RWPE1 (cell line): ENCODE measurements at regions of chr9 and their contacts with region 1.

Region 1: GRCh38 chr9:78296893-78297671 is at the start of gene PSAT1:
- DNase-seq: peak; percentile 100
- H3K27ac ChIP-seq: peak within 1 kb of the TSS; percentile 98
- CTCF ChIP-seq: no peak

Region 2: DNA sequence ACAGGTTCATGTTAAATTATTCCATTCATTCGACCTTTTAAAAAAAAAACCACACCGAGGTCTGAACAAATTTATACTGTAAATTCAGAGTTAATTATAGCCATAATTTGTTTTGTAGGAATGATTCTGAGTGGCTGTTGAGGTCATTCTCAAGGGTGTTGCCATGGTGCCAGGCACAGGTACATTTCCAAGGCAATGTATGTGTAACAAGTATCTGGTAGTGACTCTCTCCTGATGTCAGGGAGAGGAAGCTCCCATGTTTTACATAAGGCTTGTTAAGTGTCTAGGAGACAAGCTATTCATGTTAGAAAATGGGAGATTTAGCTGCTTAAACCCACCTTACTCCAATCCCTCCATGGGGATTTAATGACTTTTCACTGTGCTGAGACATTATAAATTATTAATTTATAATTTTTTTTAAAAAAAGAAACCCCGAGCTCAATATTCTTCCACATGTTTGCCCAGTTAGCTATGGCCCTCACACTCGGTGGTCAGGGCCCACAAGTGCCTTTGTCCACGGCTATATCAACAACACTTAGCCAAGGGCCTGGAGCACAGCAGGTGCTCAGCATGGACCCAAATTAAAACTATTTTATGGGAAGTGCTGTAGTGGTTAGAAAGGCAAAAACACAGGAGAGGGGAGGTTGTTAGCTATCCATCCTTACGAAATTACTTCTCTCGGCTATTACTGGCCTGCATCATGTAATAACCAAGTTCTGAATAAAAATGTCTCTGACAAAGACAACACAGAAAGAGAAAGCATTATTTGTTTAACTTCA is 494.4 kb before region 1 on chr9:
- CTCF ChIA-PET with region 1: interaction called, 10 read pairs
- POLR2A ChIA-PET with region 1: no interaction called
- DNase-seq: no peak
- H3K27ac ChIP-seq: no peak overlapping the region
- CTCF ChIP-seq: no peak

Region 3: DNA sequence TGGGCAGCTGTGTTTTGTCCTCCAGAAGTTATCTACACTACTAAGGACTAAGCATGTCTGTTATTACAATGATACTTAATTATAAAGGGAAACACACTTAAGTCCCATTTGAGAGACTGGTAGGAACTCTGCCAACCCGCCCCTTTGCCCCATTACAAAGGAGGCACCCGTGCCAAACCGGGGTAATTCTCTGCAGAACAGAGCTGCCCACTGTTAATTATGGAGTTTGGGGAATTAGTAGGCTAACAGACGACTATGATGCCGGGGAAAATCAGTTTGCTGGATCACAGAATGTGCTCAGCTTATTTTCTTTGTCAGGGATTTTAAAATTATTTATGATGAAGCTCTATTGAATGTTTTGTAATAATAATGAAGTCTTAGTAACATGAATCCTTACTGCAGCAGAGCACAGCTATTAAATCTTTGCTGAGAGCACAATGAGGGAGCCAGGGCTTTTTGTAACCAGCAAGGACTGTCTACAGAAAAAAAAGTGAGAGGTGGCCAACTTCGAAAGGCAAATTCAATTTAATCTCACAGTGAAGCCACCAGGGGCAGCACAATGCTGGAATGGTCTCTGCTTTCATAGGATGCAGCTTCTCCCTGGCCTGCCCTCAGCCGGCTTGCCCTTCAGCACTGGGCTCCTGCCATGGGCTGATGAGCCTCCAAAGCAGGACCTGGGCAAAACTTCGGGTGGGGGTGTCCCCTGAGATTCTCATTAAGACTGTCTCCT is 400.0 kb before region 1 on chr9:
- CTCF ChIA-PET with region 1: no interaction called
- POLR2A ChIA-PET with region 1: no interaction called
- DNase-seq: no peak
- H3K27ac ChIP-seq: no peak overlapping the region
- CTCF ChIP-seq: no peak

Region 4: DNA sequence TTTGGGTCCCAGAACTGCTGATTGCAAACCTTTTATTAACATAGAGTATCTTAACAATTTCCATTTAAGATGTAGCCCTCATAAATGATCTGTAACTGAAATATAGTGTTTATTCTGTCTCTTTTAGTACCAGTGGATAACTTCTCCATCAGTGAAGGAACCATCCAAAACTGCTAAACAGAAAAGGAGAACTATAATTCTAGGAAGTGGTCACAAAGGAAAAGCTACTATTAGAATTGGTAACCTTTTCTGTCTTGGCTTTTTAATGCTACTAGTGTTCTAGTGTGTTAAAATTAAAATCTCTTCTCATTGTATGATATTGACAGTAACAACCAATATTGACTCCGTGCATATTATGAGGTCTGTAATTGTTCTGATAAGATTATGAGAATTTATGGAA is 48.4 kb before region 1 on chr9:
- CTCF ChIA-PET with region 1: no interaction called
- POLR2A ChIA-PET with region 1: no interaction called
- DNase-seq: no peak
- H3K27ac ChIP-seq: no peak overlapping the region
- CTCF ChIP-seq: no peak

Region 5: GRCh38 chr9:78552802-78553201 is 255.7 kb after region 1 on chr9:
- CTCF ChIA-PET with region 1: no interaction called
- POLR2A ChIA-PET with region 1: no interaction called
- DNase-seq: no peak
- H3K27ac ChIP-seq: no peak overlapping the region
- CTCF ChIP-seq: no peak

Region 6: DNA sequence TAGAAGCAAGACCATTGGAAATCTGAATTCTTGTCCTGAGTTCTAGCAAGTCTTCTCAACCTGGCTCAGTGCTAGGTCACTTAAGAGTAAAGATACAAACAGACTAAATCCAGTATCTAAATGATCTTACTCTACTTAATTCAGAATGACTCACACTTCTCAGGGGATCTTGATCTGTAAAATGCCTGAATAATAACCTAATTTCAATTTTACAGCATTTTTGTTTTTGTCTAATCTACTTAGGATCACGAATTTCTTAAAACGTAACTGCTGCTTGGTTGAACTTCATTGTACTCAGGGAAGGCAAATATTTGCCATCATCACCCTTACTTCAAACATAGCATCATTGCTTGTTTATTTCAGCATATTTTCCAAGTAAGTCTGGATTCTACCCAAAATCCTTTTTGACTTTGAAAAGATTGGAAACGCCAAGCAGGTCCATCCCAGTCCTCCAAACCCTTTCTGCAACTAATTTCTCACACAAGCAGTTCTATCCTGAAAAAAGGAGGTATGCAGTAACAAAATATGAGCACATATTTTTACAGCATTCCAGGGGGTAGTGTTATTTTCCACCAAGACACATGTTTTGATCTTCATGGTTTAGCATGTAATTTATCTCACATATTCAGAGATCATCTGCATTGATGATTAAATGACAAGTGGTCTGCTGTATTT is 582.5 kb after region 1 on chr9:
- CTCF ChIA-PET with region 1: no interaction called
- POLR2A ChIA-PET with region 1: no interaction called
- DNase-seq: no peak
- H3K27ac ChIP-seq: no peak overlapping the region
- CTCF ChIP-seq: no peak